Activated CD8-positive, alpha-beta memory T cell treated with anti-CD3 and anti-CD28 coated beads, Interleukin-2, amount 10 ng/mL, durations not matched to agents 7 days and 5 days (primary cell): ENCODE measurements at regions of chr22 and their contacts with region 1.

Region 1: DNA sequence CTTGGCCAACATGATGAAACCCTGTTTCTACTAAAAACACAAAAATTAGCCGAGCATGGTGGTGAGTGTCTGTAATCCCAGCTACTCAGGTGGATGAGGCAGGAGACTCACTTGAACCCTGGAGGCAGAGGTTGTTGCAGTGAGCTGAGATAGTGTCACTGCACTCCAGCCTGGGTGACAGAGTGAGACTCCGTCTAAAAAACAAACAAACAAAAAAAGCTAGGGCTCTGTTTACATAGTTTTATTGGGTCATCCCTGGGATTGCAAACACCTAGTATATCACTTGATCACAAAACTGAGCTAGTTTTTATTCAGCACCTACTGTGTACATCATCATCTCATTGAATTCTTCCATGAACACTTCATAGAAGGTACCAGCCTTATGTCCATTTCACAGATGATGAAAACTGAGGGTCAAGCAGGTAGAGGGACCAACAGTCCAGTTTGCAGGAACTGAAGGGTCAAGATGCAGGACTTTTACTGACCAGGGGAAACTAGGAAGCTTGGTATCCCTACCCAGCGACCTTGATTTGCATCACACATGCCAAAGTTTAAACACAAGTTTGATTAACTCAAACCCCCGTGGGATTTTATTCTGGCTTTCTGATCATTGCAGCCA is 9.2 kb upstream of the MRTFA start:
- DNase-seq: no peak
- ATAC-seq: no peak
- H3K4me3 Mint-ChIP-seq: no peak overlapping the region
- H3K27ac Mint-ChIP-seq: no peak overlapping the region
- H3K4me1 Mint-ChIP-seq: peaks cover 19% of the 10 kb centered on the region
- H3K27me3 Mint-ChIP-seq: no peaks in the 10 kb centered on the region

Region 2: GRCh38 chr22:40487663-40488249 is 157.9 kb before region 1 on chr22:
- CTCF ChIA-PET with region 1: interaction called, 18 read pairs
- DNase-seq: no peak
- ATAC-seq: peak; percentile 67
- H3K4me3 Mint-ChIP-seq: no peak overlapping the region
- H3K27ac Mint-ChIP-seq: no peak overlapping the region
- H3K4me1 Mint-ChIP-seq: peaks cover 15% of the 10 kb centered on the region
- H3K27me3 Mint-ChIP-seq: no peaks in the 10 kb centered on the region

Region 3: DNA sequence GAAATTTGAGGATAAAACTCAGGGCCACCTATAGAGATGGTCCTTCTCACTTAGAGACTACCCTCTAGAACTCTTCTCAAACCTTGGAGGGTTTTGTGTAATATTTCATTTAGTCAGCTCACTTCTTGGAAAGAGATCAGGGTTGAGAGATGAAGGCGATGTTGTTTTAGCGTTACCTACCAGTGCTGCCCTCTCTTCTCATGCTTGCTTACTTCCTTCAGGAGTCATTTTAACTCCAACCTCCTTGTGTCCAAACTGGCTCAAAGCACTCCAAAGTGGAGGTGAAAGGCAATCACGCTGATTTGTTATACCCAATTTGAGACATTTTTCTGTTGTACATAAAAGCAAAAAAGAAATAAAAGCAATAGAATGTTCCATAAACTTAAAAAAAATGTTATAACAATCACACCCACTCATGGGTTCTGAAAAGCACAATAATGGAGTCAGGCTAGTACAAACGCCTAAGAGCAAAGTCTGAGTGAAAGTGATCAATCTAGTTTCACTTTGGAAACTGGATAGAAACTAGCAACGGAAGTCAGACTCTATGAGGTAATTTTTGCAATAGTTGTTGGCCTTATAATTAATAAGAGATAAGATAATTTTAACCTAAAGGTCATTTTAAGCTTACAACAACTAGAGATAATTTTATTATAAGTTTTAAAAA is 126.3 kb before region 1 on chr22:
- CTCF ChIA-PET with region 1: interaction called, 88 read pairs
- DNase-seq: no peak
- ATAC-seq: peak; percentile 94
- H3K4me3 Mint-ChIP-seq: peak overlapping the region; percentile 42
- H3K27ac Mint-ChIP-seq: peak overlapping the region; percentile 75
- H3K4me1 Mint-ChIP-seq: peaks cover 26% of the 10 kb centered on the region
- H3K27me3 Mint-ChIP-seq: no peaks in the 10 kb centered on the region

Region 4: DNA sequence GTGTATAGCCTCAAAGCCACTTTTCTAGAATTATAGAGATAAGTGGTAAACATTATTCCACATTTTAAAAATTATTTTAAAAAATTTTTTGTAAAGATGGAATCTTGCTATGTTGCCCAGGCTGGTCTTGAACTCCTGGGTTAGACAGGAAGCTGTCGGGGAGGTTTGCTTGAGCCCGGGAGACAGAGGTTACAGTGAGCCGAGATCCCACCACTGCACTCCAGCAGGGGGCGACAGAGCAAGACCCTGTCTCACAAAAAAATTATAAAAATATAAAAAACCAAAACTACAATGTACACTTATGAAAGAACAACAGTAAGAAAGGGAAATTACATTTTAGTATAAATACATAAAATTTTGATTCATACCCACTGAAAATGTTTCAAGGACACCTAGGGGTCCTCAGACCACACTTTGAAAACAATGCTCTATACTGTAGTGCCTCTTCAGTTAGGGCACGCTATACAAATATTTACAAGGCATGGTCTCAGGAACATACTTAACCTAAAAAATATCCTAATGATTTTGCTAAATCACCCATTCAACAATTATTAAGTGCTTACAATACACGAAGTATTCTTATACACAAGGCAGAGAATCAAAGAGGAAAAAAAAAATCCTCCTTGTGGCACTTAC is 120.3 kb before region 1 on chr22:
- CTCF ChIA-PET with region 1: interaction called, 88 read pairs
- DNase-seq: peak; percentile 78
- ATAC-seq: peak; percentile 81
- H3K4me3 Mint-ChIP-seq: no peak overlapping the region
- H3K27ac Mint-ChIP-seq: no peak overlapping the region
- H3K4me1 Mint-ChIP-seq: peaks cover 27% of the 10 kb centered on the region
- H3K27me3 Mint-ChIP-seq: no peaks in the 10 kb centered on the region

Region 5: GRCh38 chr22:40898850-40899357 is 253.2 kb after region 1 on chr22:
- CTCF ChIA-PET with region 1: interaction called, 16 read pairs
- DNase-seq: no peak
- ATAC-seq: peak; percentile 80
- H3K4me3 Mint-ChIP-seq: peak overlapping the region; percentile 33
- H3K27ac Mint-ChIP-seq: peak overlapping the region; percentile 71
- H3K4me1 Mint-ChIP-seq: peaks cover 16% of the 10 kb centered on the region
- H3K27me3 Mint-ChIP-seq: no peaks in the 10 kb centered on the region